ENCODE measurements at regions of chr20 and their contacts with region 1.

Region 1: DNA sequence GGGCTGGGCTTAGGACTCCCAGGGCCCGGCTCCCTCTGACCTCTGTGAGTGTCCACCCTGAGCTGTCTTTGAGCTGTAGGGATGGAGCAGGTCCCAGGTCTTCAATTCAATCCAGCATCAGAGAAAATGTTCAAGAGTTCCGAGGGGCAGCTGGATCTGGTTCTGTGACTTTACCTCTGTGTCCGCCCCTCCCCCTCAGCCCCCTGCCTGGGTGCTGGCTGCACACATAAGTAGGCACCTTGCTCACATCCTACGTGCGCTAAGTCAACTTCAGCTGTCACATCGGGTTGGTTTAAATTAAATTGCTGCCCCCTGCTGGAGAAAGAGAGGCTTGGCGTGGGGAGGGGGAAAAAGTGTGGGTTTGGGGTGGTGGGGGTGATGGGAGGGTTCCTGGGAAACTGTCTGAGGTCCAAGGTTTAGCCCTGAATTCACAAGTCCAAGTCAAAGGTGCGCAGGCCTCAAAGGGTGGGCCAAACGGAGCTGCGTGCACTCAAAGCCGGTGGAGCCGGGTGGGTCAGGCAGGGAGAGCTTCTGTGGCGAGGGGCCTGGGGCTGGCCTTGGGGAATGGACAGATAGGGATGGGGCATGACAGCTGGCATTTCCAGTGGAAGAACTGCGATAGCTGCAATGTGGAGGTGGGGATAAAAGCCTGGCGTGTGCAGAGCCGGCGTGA is 3.0 kb downstream of the WFDC5 start:
- DNase-seq: no peak
- CTCF ChIP-seq: peak; percentile 47

Region 2: GRCh38 chr20:44896583-44896982 is 215.4 kb before region 1 on chr20:
- CTCF ChIA-PET with region 1: no interaction called
- POLR2A ChIA-PET with region 1: no interaction called
- DNase-seq: no peak
- CTCF ChIP-seq: no peak

Region 3: GRCh38 chr20:45124365-45124764 is 12.4 kb after region 1 on chr20 and contains the start of gene WFDC12:
- CTCF ChIA-PET with region 1: interaction called, 15 read pairs
- POLR2A ChIA-PET with region 1: no interaction called
- DNase-seq: no peak
- CTCF ChIP-seq: no peak